RWPE1 (cell line): ENCODE measurements at regions of chr12 and their contacts with region 1.

Region 1: DNA sequence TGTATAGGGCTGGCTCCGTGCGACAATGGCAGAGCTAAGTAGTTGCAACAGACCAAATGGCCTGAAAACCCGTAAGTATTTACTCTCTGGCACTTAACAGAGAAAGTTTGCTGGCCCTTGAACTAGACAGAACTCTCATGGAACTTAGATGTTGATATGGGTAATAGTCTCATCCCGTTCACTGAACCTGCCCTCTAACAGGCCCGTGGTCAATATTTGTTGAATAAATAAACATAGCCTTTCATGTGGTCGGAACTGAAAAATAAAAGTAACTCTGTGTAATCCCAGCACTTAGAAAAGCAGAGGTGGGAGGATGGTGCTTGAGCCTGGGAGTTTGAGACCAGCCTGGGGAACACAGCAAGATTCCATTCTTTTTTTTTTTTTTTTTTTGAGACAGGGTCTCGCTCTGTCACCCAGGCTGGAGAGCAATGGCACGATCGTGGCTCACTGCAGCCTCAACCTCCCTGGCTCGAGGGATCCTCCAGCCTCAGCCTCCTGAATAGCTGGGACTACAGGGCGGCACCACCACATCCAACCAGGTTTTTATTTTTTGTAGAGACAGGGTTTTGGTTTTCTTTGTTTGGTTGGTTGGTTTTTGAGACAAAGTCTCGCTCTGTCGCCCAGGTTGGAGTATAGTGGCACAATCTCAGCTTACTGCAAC is 29.7 kb downstream of the KDM2B start:
- DNase-seq: no peak
- H3K27ac ChIP-seq: no peak overlapping the region
- CTCF ChIP-seq: no peak

Region 2: DNA sequence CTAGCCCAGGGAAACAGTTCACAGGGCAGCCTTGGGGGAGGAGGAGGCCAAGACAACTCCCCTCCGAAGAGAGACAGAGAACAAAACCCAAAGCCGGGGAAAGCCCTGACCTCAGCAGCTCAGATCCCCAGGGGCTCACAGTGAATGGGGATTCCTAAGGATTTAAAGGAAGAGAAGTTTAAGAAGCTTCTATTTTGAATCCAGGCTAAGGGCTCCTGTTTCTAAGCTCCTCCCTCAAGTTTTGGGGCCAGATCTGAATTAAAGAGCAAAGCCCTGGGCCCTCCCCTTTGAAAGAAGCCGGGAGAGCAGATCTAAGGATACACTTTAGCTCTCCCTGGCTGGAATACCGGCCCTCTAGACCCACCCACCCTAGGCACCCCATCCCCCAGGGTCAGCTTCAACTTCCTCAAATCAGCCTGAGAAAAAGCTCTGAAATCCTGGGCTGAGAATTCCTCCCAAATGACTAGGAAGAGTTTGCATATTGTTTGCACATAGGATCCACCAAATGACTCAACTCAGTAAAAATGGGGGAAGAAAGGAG is 25.8 kb after region 1 on chr12:
- CTCF ChIA-PET with region 1: interaction called, 12 read pairs
- POLR2A ChIA-PET with region 1: no interaction called
- DNase-seq: peak; percentile 55
- H3K27ac ChIP-seq: peak overlapping the region; percentile 69
- CTCF ChIP-seq: no peak

Region 3: DNA sequence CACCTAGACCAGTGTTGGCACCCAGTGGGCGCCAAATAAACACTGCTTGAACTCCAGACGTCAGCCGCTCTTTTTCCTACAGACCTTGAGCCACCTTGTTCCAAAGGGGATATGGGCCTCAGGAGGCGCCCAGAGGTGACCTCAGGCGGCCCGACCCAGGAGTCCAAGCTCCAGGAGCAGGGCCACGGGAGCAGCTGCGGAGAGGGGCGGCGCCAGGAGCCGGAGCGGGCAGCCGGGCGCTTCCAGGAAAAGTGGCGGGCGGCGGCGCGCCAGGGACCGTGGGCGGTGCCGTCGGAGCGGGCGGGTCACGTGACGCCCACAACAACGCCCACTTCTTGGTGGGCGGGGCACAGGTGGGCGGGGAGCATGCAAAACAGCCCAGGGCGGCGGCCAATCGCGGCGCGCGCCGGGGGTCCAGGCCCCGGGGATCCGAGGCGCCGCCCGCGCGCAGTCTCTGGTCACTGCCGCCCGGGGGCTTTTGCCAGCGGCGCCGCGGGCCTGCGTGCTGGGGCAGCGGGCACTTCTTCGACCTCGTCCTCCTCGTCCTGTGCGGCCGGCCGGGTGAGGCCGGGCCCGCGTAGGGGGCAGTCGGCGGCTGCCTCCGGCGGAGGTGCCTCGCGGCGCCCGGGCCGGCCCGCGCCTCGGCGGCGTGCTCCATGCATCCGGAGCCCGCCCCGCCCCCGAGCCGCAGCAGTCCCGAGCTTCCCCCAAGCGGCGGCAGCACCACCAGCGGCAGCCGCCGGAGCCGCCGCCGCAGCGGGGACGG is 75.2 kb after region 1 on chr12 and contains the start of gene ORAI1:
- CTCF ChIA-PET with region 1: interaction called, 23 read pairs
- POLR2A ChIA-PET with region 1: no interaction called
- DNase-seq: peak; percentile 95
- H3K27ac ChIP-seq: peak within 1 kb of the TSS; percentile 89
- CTCF ChIP-seq: no peak

Region 4: GRCh38 chr12:121668750-121669520 is 117.8 kb after region 1 on chr12:
- CTCF ChIA-PET with region 1: interaction called, 15 read pairs
- POLR2A ChIA-PET with region 1: interaction called, 5 read pairs
- DNase-seq: no peak
- H3K27ac ChIP-seq: no peak overlapping the region
- CTCF ChIP-seq: peak; percentile 48

Region 5: DNA sequence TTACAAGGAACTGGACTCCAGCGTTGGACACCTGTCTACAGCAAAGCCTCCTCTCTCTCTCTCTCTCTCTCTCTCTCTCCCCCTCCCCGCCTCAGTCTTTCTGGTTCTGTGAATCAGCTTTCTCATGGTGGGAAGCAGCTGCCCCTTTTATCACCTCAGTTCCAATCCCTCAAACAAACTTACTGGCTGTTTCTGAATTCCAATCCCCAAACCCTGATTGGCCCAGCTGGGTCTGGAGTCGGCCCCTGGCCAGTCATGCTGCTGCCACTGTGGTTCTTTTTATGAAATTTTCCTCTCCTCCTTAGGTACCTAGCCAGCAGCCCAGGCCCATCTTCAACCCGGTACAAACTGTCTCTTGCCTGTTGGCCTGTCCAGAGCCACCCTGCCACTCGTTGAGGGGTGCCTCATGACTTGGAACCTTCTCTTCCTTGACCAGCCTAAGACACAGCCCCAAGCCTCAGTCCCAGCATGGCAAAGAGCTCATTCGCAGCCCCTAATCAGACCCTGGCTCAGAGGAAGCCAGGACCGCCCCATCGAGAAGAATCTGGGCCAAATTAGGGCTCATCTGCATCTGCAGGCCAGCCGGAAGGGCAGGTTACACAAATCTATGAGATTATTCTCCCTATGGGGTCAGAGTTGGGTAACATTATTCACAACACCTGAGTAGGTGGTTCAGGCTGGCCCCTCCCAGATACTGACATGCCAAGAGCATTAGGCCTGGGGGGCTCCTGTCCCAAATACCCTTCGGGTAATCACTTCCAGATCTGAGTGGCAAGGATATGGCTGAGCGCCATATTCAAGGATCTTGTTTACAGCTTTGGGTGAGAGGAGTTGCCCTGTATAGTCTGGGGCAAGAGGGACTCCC is 127.8 kb after region 1 on chr12:
- CTCF ChIA-PET with region 1: interaction called, 10 read pairs
- POLR2A ChIA-PET with region 1: no interaction called
- DNase-seq: no peak
- H3K27ac ChIP-seq: no peak overlapping the region
- CTCF ChIP-seq: no peak